ENCODE measurements at regions of chr2 and their contacts with region 1.

Region 1: GRCh38 chr2:33848486-33848885 is 249.4 kb upstream of the FAM98A start:
- DNase-seq: peak; percentile 25
- H3K4me3 ChIP-seq: no peak overlapping the region
- H3K27ac ChIP-seq: no peak overlapping the region
- H3K4me1 ChIP-seq: no peaks in the 10 kb centered on the region
- H3K27me3 ChIP-seq: no peaks in the 10 kb centered on the region
- CTCF ChIP-seq: no peak

Region 2: DNA sequence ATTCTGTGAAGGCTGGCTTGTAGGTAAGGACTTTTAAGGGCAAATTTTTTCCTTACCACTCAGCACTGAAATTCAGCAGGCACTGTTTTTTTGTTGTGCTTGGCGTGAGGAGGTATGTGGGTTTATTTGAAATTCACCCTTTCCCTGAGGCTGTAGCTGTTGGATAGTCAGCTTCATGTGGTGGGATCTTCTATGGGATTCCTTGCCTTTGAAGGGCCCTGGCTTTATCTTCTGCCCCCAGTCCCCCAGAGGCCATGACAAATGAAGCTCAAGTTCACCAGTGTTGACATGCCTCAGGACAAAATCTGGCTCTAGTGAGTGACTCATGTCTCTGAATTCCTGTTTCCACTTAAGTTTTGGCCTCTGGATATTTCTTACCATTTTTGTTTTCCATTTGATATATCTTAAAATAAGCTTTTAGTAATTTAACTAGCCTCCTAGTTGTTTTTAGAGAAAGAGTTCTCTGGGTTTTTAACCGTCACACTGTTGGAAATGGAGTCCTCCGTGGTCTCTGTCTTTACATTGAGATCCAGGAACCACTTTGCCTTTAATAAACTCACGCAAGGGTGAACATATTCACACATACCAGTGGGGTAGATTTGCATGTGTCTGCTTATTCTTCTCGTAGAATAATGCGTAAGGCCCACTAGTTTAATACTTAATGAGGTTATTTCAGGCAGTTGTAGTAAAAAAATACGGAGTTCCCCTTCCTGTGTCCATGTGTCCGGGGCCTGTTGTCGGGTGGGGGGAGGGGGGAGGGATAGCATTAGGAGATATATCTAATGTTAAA is 38.2 kb before region 1 on chr2:
- CTCF ChIA-PET with region 1: no interaction called
- dilution Hi-C with region 1: loop called (anchors 5 kb)
- in situ Hi-C with region 1: no loop called
- intact Hi-C with region 1: no loop called
- DNase-seq: no peak
- H3K4me3 ChIP-seq: no peak overlapping the region
- H3K27ac ChIP-seq: no peak overlapping the region
- H3K4me1 ChIP-seq: no peaks in the 10 kb centered on the region
- H3K27me3 ChIP-seq: no peaks in the 10 kb centered on the region
- CTCF ChIP-seq: no peak